ENCODE measurements at regions of chr6 and their contacts with region 1.

Region 1: DNA sequence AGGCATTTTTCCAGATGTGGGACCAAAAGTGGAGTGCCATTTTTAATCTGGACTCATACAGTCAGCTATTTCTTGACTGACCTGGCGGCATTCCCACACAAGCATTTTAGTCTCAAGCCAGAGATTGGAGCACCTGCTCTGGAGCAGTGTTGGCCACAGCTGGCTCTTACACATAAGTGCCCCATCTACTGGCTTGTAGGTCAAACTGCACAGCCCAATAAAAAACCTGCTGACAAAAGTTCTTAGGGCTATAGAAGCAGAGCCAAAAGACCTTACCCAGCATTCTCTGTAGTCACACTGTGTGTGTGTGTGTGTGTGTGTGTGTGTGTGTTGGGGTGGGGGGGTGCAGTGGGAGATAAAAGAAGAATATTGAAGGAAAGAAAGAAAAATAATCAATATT is 38.6 kb upstream of the SENP6 start:
- DNase-seq: no peak
- ATAC-seq: 0 out of 2 replicates have a peak, but pooled peaks have one; percentile 62
- H3K4me3 ChIP-seq: no peak overlapping the region
- H3K27ac ChIP-seq: no peak overlapping the region
- H3K4me1 ChIP-seq: no peaks in the 10 kb centered on the region
- H3K27me3 ChIP-seq: no peaks in the 10 kb centered on the region; the same call in 1 of the 2 replicates
- CTCF ChIP-seq: peak; percentile 52

Region 2: GRCh38 chr6:75581231-75581630 is 18.2 kb after region 1 on chr6:
- CTCF ChIA-PET with region 1: interaction called, 3 read pairs
- POLR2A ChIA-PET with region 1: interaction called, 12 read pairs
- in situ Hi-C with region 1: no loop called
- intact Hi-C with region 1: no loop called
- DNase-seq: no peak
- ATAC-seq: no peak
- H3K4me3 ChIP-seq: no peak overlapping the region
- H3K27ac ChIP-seq: no peak overlapping the region
- H3K4me1 ChIP-seq: no peaks in the 10 kb centered on the region
- H3K27me3 ChIP-seq: no peaks in the 10 kb centered on the region
- CTCF ChIP-seq: no peak

Region 3: DNA sequence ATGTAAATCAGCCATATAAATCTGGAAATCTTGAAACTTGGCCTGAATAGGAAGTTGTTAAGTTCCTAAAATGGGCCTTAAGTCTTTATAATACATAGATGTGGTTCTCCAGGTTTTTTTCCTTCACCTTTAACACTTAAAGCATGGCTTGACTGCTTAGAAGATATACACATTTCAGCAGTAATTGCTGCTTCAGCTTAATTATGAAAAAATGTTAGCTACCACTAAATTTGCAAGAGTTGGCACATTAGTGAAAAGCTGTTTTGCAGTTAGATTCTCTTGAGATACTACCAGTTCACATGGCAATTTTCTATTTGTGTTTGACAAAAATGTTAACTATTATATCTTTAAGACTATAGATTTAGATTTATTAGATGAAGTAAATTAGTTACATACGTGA is 113.3 kb after region 1 on chr6:
- CTCF ChIA-PET with region 1: no interaction called
- POLR2A ChIA-PET with region 1: no interaction called
- in situ Hi-C with region 1: no loop called
- intact Hi-C with region 1: no loop called
- DNase-seq: no peak
- ATAC-seq: no peak
- H3K4me3 ChIP-seq: no peak overlapping the region
- H3K27ac ChIP-seq: no peak overlapping the region
- H3K4me1 ChIP-seq: no peaks in the 10 kb centered on the region
- H3K27me3 ChIP-seq: no peaks in the 10 kb centered on the region
- CTCF ChIP-seq: no peak